ENCODE measurements at regions of chr16 and their contacts with region 1.

Region 1: DNA sequence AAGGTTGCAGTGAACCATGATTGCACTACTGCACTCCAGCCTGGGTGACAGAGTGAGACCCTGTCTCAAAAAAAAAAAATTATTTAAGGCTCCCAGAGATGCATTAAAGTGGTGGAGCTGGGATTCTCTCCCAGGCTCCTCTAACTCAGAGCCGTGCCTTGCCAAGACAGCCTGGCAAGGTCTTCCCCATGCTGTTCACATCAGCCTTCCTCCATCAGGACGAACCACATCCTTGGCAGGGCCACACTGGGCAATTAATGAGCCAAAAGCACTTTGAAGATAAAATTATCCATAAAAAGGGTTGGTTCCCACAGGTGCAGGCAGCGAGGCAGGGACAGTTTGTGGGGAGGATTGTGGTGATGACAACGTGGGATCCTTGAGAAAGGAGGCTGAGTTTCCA is 19.8 kb upstream of the BBS2 start:
- DNase-seq: no peak
- H3K4me3 Mint-ChIP-seq: no peak overlapping the region
- H3K27ac Mint-ChIP-seq: no peak overlapping the region
- H3K4me1 Mint-ChIP-seq: no peaks in the 10 kb centered on the region
- H3K27me3 Mint-ChIP-seq: peaks cover 18% of the 10 kb centered on the region

Region 2: GRCh38 chr16:56558024-56558747 is 18.5 kb after region 1 on chr16:
- CTCF ChIA-PET with region 1: no interaction called
- POLR2A ChIA-PET with region 1: no interaction called
- intact Hi-C with region 1: loop called (anchors 2 kb)
- DNase-seq: no peak
- H3K4me3 Mint-ChIP-seq: no peak overlapping the region
- H3K27ac Mint-ChIP-seq: no peak overlapping the region
- H3K4me1 Mint-ChIP-seq: no peaks in the 10 kb centered on the region
- H3K27me3 Mint-ChIP-seq: peaks cover 9% of the 10 kb centered on the region

Measured in activated CD4-positive, alpha-beta memory T cell treated with anti-CD3 and anti-CD28 coated beads for 36 hours (primary cell).